ENCODE measurements at regions of chr10 and their contacts with region 1.

Region 1: DNA sequence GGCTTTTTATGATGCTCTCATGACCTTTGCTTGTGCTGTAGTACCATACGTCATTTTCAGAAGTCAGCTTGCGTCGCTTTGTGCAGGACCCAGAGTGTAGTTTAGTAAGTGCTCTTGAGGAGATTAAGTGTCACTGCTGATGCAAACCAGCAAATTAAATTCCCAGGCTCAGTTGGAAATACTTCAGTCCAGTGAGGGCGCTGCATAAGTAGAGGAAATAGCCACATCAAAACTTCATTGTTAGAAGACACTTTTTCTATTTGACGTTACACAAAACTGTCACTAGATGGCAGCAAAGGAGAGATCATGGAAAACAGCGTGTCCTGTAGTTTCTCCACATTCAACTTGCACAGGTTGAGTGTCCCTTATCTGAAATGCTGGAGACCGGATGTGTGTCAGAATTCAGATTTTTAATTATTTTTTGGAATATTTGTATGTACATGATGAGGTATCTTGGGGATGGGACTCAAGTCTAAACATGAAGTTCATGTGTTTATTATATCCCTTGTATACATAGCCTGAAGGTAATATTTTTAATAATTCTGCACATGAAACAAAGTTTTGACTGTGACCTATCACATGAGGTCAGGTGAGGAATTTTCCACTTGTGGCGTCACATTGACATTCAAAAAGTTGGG is 7.9 kb downstream of the ZNF22 start:
- DNase-seq: peak; percentile 35
- ATAC-seq: peak; percentile 94
- H3K4me3 ChIP-seq: no peak overlapping the region
- H3K27ac ChIP-seq: no peak overlapping the region
- H3K4me1 ChIP-seq: no peaks in the 10 kb centered on the region
- H3K27me3 ChIP-seq: no peaks in the 10 kb centered on the region
- CTCF ChIP-seq: peak; percentile 65 to 83 (median 80)
- EP300 ChIP-seq: no peak
- POLR2A ChIP-seq: no peak
- RAD21 ChIP-seq: peak; percentile 78

Region 2: DNA sequence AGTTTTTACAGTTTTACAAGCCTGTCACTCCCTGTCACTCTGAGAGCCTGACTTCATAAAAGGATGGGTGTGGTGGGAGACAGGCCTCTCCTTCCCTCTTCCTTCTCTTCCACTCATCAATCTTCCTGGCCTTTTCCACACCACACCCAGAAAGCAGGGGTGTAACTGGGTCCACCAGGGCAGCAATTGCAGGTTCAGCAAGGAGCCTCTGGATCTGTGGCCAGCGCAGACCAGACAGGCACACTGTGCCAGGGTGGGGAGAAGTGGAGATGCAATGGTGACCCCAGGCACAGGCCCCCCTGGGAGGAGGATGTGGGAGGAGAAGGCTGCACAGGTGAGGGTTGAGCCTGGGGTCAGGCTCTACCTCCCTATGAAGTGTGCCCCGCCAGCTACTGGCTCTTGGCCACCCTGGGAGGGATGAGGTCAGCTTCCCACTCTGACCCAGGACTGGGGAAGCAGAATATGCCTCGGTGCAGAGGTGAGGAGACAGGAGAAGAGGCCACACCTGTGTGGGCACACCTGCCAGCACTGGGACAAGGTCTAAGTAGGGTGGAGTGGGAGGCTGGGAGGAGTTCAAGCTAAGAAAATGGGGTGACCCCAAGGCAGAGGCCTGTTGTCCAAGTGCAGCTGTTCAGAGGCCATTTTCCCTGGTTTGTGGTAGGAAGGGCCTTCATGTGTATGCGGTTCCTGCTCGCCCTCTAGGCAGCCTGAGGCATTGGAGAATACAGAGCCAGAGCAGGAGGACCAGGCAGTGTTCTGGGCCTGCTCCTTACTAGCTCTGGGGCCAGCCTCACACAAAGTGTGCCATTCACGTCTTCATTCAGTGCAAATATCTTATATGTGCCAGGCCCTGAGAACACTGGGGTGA is 117.7 kb before region 1 on chr10:
- CTCF ChIA-PET with region 1: no interaction called
- POLR2A ChIA-PET with region 1: no interaction called
- RAD21 ChIA-PET with region 1: no interaction called
- SMC1A ChIA-PET with region 1: no interaction called
- in situ Hi-C with region 1: no loop called
- intact Hi-C with region 1: no loop called
- DNase-seq: no peak
- ATAC-seq: no peak
- H3K4me3 ChIP-seq: no peak overlapping the region
- H3K27ac ChIP-seq: no peak overlapping the region
- H3K4me1 ChIP-seq: no peaks in the 10 kb centered on the region
- H3K27me3 ChIP-seq: no peaks in the 10 kb centered on the region; a peak in 1 of 4 replicates
- CTCF ChIP-seq: no peak
- EP300 ChIP-seq: no peak
- POLR2A ChIP-seq: no peak
- RAD21 ChIP-seq: no peak

Region 3: DNA sequence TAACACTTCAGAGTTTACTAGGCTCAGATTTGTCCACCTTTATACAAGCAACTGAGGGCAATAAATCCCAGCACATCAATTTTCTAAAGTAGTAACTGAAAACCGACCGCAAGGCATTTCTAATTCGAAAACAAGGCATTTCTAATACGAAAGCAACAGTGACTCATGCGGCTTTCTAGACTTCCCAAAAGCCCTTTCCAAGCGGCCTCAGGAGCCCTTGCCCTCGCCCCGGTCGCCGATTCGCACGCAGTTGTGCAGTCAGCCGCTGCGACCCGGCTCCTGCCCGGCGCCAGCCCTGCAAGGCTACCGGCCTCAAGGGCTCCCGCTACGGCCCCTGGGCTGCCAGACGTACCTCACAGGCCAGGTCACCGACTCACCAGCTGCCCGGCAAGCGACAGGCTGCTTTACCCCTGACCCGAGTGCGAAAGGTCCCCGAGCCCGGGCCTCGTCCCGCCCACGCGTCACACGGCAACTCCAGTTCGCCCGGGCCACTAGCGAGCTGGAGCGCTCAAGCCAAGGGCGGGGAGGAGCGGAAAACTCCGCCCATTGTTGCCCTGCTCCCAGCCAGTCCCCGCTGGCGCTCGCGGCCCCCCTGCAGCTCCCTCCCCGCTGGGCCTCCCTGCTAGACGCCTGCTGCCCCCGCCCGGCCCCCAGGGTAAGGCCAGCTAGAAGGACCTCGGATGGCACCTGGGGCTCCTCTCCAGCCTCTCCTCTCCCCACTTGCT is 1014.5 kb after region 1 on chr10:
- CTCF ChIA-PET with region 1: no interaction called
- POLR2A ChIA-PET with region 1: no interaction called
- RAD21 ChIA-PET with region 1: no interaction called
- SMC1A ChIA-PET with region 1: no interaction called
- in situ Hi-C with region 1: loop called (anchors 10 kb)
- intact Hi-C with region 1: no loop called
- DNase-seq: peak; percentile 56
- ATAC-seq: peak; percentile 97
- H3K4me3 ChIP-seq: peak overlapping the region; percentile 58
- H3K27ac ChIP-seq: peak overlapping the region; percentile 59
- H3K4me1 ChIP-seq: peaks cover 12% of the 10 kb centered on the region
- H3K27me3 ChIP-seq: no peaks in the 10 kb centered on the region
- CTCF ChIP-seq: peak; percentile 22 to 57 (median 56); a peak in 4 of 6 replicates
- EP300 ChIP-seq: no peak
- POLR2A ChIP-seq: peak; percentile 81
- RAD21 ChIP-seq: peak; percentile 30; the same call in 1 of the 2 replicates